ENCODE measurements at regions of chr22 and their contacts with region 1.

Region 1: DNA sequence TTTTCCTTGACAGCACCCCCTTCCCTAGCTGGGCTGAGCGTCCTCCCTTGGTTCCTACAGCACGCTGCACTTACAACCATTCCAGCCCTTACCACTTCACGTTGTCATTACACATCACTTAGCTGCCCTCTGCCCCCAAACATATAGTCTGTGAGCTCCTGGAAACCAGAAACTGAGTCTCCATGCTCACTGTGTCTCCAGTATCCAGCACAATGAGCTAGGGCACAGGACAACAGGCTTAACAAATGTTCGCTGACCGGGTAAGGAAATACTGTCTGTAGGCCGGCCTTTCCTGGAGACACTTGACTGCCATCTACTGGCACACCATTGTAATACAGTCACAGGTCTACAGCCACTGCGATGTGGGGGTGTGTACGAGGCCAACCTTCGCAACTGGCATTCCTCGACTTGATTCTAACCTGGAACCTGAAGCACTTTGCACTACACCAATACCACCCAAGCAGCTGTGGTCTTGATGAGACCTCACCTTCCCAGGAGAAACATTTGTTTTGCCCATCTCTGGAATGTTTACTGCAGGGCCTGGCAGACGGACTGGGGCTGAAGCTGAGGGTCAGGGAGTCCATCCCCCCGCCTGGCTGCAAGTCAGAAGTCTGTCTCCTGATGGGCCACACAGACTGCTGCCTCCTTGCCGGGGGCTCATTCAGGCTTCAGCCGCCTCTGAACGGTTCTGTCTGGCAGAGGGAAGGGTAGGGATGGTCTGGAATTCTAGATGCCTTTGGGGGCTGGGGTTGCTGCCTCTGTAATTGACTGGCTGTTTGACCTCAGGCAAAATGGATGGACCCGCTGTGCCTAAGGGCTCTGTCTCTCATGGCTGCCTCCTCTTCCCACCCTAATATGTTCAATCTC is 72.0 kb downstream of the SYN3 start:
- DNase-seq: peak in 7 of 9 donors; percentile 5 to 40 (median 29)
- ATAC-seq: peak; percentile 68
- H3K4me3 ChIP-seq: no peak overlapping the region
- H3K4me3 Mint-ChIP-seq: no peak overlapping the region
- H3K27ac ChIP-seq: no peak overlapping the region
- H3K27ac Mint-ChIP-seq: no peak overlapping the region
- H3K4me1 ChIP-seq: no peaks in the 10 kb centered on the region
- H3K4me1 Mint-ChIP-seq: peaks cover 0 to 4% (median 0%) of the 10 kb centered on the region in 7 donors
- H3K27me3 ChIP-seq: no peaks in the 10 kb centered on the region
- H3K27me3 Mint-ChIP-seq: peaks cover 0 to 8% (median 0%) of the 10 kb centered on the region in 5 donors

Region 2: DNA sequence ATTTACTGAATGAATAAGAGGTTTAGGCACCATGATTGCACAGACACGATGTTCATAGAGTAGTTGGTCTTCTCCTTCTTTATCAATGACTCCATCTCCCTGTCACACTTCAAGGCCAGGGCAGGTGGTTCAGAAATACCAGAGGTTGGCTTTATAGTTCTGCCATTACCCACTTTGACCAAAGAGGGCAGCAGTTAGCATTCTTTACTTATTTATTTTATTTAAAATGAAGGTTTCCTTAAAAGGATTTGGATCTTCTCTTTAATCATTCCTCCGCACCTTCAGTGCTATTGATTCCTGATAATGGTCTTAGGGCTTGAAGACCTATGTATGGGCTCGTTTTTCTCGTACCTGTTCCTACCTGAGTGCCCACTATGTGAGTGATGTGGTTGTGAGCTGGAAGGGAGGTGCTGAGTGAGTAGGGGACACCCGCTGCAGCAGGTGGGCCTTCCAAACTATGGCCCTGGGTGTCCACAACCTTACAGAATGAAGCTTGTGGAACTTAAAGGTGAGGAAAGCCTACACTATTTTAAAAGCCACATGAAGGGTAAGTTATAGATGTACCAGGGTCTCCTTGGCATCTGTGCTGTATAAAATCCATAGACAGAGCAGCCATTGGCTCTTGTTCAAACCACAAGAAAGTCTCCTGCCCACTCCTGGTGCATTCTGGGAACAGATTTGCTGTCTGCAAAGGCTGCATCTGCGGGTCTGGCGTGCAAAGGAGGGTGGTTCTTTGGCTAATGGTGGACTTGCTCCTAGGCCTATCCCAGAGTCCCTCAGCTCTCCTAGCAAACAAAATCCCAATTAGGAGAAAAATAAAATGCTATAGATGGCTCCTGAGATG is 149.6 kb before region 1 on chr22:
- CTCF ChIA-PET with region 1: no interaction called
- POLR2A ChIA-PET with region 1: no interaction called
- intact Hi-C with region 1: loop called in 1 of 2 experiments (anchors 10 kb)
- DNase-seq: peak in 3 of 9 donors; percentile 1 to 6 (median 2)
- ATAC-seq: no peak
- H3K4me3 ChIP-seq: no peak overlapping the region
- H3K4me3 Mint-ChIP-seq: no peak overlapping the region
- H3K27ac ChIP-seq: no peak overlapping the region
- H3K27ac Mint-ChIP-seq: no peak overlapping the region
- H3K4me1 ChIP-seq: no peaks in the 10 kb centered on the region
- H3K4me1 Mint-ChIP-seq: peaks cover 4 to 8% (median 8%) of the 10 kb centered on the region in 7 donors
- H3K27me3 ChIP-seq: no peaks in the 10 kb centered on the region
- H3K27me3 Mint-ChIP-seq: peaks cover 0 to 4% (median 3%) of the 10 kb centered on the region in 5 donors

Measured in naive thymus-derived CD4-positive, alpha-beta T cell (primary cell).